Mammary epithelial cell (primary cell): ENCODE measurements at regions of chr16 and their contacts with region 1.

Region 1: DNA sequence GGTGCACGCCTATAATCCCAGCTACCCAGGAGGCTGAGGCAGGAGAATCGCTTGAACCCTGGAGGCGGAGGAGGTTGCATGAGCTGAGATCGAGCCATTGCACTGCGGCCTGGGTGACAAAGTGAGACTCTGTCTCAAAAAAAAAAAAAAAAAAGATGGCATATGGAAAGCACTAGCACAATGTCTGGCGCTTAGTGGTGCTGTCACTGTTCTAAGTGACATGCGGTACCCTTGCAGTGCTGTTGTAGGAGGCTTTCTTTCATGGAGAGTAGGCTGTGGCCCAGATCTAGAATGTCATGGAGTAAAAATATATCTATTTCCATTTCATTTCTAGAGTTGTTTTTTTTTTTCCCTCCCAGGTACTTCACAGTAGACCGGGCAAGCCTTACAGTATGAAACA is 14.6 kb upstream of the METTL9 start:
- DNase-seq: no peak
- H3K4me3 ChIP-seq: no peak overlapping the region
- H3K27ac ChIP-seq: no peak overlapping the region
- H3K4me1 ChIP-seq: no peaks in the 10 kb centered on the region
- H3K27me3 ChIP-seq: no peaks in the 10 kb centered on the region
- CTCF ChIP-seq: no peak

Region 2: GRCh38 chr16:21638573-21638975 is 53.8 kb after region 1 on chr16:
- CTCF ChIA-PET with region 1: no interaction called
- dilution Hi-C with region 1: no loop called
- in situ Hi-C with region 1: loop called (anchors 5 to 10 kb)
- intact Hi-C with region 1: loop called (anchors 1 kb)
- DNase-seq: peak; percentile 91
- H3K4me3 ChIP-seq: no peak overlapping the region
- H3K27ac ChIP-seq: peak overlapping the region; percentile 84
- H3K4me1 ChIP-seq: peaks cover 25% of the 10 kb centered on the region
- H3K27me3 ChIP-seq: no peaks in the 10 kb centered on the region
- CTCF ChIP-seq: no peak

Region 3: GRCh38 chr16:22694887-22695382 is 1110.1 kb after region 1 on chr16:
- CTCF ChIA-PET with region 1: no interaction called
- dilution Hi-C with region 1: no loop called
- in situ Hi-C with region 1: loop called (anchors 5 kb)
- intact Hi-C with region 1: no loop called
- DNase-seq: peak; percentile 51
- H3K4me3 ChIP-seq: no peak overlapping the region
- H3K27ac ChIP-seq: no peak overlapping the region
- H3K4me1 ChIP-seq: peaks cover 5% of the 10 kb centered on the region
- H3K27me3 ChIP-seq: no peaks in the 10 kb centered on the region
- CTCF ChIP-seq: no peak